Cardiac septum (tissue), 1 donor: ENCODE measurements at regions of chr12 and their contacts with region 1.

Region 1: DNA sequence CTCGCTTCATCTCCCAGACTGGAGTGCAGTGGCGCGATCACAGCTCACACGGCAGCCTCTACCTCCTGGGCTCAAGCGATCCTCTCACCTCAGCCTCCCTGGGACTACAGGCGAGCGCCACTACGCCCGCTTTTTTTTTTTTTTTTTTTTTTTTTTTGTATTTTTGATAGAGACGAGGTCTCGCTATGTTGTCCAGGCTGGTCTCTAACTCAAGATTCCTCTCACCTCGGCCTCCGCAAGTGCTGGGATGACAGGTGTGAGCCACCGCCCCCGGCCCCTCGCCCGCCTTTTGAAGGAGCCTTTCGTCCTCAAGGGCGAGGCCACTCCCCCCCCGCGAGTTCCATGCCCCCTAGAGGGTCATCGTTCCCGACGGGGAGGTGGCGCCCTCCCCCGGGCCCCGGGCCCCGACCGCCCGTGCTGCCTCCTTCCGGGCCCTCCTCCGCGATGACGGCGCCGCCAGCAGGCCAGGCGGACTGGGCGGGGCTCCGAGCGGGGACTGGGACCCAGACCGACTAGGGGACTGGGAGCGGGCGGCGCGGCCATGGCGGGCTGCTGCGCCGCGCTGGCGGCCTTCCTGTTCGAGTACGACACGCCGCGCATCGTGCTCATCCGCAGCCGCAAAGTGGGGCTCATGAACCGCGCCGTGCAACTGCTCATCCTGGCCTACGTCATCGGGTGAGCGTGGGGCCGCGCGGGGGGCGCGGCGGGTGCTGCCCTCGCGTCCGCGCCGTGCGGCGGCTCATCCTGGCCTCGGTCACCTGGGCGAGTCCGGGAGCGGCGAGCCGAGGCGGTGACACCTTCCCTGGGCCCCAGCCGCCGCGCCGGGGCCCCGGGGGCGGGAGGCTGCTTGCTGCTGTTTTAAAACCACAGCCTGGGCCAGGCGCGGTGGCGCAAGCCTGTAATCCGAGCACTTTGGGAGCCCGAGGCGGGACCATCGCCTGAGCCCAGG is at the start of gene P2RX4:
- DNase-seq: peak; percentile 93
- total RNA-seq, gene P2RX4: 6.4 TPM

Region 2: DNA sequence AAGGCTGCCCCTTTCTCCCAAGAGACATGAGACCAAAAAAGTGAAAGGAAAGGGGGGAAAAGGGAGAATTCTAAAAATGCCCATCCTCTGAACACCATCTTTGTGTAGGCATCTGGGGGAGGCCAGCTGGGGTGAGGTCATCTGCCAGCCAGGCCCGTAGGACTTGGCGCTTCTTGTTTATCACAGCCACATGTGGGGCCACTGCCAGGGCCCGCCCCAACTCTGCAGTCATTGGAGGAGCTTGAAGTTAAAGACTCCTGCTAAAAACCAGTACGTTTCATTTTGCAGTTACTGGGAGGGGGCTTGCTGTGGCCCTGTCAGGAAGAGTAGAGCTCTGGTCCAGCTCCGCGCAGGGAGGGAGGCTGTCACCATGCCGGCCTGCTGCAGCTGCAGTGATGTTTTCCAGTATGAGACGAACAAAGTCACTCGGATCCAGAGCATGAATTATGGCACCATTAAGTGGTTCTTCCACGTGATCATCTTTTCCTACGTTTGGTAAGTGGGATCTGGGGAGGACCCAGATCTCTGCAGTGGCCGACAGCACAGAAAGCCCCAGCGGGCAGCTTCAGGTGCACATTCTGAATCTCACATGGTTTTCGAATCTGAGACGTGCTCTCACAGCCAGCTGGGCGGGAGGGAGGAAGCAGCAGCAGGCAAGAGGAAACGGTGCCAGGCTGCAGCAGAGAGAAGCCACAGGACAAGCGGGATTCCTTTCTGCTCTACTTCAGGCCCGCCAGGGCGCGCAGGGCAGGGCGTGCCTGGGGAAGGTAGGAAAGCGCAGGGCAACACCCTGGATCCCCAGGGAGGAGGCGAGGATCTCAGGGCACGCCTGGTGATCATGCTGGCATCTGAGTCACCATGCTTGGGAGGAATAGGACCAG is 77.1 kb before region 1 on chr12 and contains the start of gene P2RX7:
- intact Hi-C with region 1: loop called (anchors 5 kb)
- DNase-seq: peak; percentile 90
- total RNA-seq, gene P2RX7: 0.65 TPM

Region 3: DNA sequence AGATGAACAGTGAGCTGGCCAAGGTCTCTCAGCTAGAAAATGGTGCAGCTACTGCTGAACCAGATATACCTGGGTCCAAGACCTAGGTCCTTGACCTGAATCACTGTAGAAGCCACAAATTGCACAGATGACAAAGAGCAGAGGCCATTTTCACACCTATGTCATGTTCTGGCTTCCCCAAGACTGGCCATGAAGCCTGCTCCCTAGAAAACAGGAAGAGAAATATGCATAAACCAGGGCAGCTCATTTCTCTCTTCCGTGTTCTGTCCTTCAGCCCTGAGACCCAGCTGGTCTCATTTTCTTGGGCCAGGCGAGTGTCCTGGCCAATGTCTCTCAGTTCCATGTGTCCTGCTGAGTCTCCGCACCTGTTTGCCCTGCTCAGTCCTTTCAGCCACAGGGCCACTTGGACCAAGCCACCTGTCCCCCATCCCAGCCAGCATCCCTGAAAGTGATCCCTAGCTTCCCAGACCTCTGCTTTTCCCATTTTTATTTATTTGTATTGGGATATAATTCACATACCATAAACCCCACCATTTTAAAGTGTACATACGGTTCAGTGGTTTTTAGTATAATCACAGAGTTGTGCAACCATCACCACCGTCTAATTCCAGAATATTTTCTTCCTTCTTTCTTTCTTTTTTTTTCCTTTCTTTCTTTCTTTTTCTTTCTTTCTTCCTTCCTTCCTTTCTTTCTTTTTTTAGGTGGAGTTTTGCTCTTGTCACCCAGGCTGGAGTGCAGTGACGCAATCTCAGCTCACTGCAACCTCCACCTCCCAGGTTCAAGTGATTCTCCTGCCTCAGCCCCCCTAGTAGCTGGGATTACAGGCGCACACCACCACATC is 50.2 kb before region 1 on chr12:
- intact Hi-C with region 1: no loop called
- DNase-seq: no peak

Region 4: GRCh38 chr12:121364683-121365121 is 154.8 kb after region 1 on chr12:
- intact Hi-C with region 1: no loop called
- DNase-seq: no peak

Region 5: DNA sequence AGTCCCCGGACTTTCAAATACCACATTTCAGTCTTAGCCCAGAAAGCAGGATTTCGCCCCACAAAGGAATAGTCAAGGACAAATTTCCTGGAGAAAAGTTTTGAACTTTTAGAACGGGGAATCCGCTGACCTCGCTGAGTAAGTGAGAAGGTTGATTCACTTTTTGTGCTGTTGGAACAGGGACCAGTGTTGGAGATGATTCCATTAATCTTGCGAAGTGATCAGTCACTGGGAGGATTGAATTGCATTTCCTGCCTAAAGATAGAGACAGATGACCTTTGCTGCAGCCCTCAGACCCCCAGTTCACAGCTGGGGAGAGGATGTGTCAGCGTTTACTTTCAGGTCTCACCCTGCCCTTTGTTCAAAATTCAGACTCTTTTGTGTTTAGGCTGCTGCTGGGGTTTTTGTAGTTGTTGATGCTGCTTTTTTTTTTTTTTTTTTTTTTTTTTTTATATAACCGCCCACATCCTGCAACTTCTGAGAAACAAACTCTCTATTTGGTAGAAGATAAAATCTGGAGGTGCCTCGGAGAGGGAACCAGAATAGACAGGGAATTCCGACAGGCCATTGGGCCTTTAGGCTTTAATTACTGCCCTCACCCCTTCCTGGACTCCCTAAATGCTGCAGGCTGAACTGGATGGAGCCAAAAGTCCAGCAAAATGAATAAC is 380.7 kb after region 1 on chr12:
- intact Hi-C with region 1: no loop called
- DNase-seq: no peak